AG04449 (cell line): ENCODE measurements at regions of chr1 and their contacts with region 1.

Region 1: DNA sequence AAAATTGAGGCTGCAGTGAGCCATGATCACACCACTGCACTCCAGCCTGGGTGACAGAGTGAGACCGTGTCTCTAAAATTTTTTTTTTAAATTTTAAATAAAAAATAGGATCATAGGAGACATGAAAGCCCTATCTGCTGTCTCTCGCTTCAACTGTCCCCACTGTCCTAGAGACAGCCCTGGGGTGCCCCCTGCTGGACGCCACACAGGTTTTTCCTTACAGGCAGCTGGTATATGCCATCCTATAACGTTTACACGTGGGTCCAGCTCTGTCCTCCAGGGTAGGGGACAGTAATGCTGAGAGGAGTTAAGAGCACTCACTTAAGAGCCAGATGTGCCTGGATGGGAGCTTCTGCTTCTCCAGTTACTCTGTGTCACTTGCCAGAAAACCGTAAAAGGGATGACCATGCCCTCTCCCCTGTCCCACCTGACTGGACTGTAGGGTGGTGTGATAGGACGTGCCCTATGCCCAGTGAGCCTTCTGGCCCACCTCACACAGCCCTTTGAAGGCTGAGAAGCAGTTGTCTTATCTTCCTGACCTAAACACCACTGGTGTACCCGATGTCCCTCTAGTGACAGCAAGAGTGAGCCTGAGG is 8.5 kb downstream of the FBXO2 start:
- DNase-seq: no peak
- H3K4me3 ChIP-seq: no peak overlapping the region
- CTCF ChIP-seq: peak; percentile 80

Region 2: GRCh38 chr1:11031624-11032262 is 614.0 kb before region 1 on chr1:
- CTCF ChIA-PET with region 1: interaction called, 311 read pairs
- POLR2A ChIA-PET with region 1: no interaction called
- DNase-seq: no peak
- H3K4me3 ChIP-seq: no peak overlapping the region
- CTCF ChIP-seq: no peak

Region 3: DNA sequence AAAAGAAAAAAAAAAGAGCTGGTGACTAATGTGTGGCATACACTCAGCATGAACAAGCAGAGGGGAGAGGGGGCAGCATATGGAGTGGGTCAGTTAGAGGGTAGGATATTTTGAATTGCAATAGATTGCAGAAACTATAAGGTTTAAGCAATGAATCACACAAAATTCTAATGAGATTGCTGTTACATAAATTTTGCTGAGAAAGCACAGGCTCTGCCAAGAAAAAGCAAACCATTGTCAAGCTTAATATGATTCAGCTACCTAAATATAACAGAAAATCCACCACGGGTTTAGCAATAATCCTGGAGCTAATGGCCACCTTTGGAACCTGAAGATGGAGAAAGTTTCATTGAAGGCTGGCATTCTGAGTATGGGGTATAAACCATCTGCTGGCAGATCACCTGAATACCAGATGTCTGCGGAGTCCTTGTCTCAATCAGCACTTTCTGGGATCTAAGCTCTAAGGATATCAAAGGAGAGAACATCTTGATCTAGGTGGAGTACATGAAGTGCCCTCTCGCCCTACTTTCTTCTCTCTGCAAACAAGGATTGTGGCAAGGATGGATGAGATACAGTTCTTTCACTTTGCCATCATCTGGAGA is 486.9 kb before region 1 on chr1:
- CTCF ChIA-PET with region 1: no interaction called
- POLR2A ChIA-PET with region 1: no interaction called
- DNase-seq: peak; percentile 93
- H3K4me3 ChIP-seq: no peak overlapping the region
- CTCF ChIP-seq: no peak

Region 4: GRCh38 chr1:11248155-11248554 is 397.6 kb before region 1 on chr1:
- CTCF ChIA-PET with region 1: interaction called, 456 read pairs
- POLR2A ChIA-PET with region 1: no interaction called
- DNase-seq: no peak
- H3K4me3 ChIP-seq: no peak overlapping the region
- CTCF ChIP-seq: no peak

Region 5: GRCh38 chr1:11281518-11282331 is 364.0 kb before region 1 on chr1:
- CTCF ChIA-PET with region 1: interaction called, 20 read pairs
- POLR2A ChIA-PET with region 1: no interaction called
- DNase-seq: peak; percentile 90
- H3K4me3 ChIP-seq: no peak overlapping the region
- CTCF ChIP-seq: no peak

Region 6: GRCh38 chr1:11707621-11708276 is 62.0 kb after region 1 on chr1:
- CTCF ChIA-PET with region 1: interaction called, 11 read pairs
- POLR2A ChIA-PET with region 1: no interaction called
- DNase-seq: no peak
- H3K4me3 ChIP-seq: no peak overlapping the region
- CTCF ChIP-seq: no peak

Region 7: GRCh38 chr1:11749203-11749689 is 103.5 kb after region 1 on chr1:
- CTCF ChIA-PET with region 1: interaction called, 11 read pairs
- POLR2A ChIA-PET with region 1: no interaction called
- DNase-seq: no peak
- H3K4me3 ChIP-seq: no peak overlapping the region
- CTCF ChIP-seq: peak; percentile 25